Dorsolateral prefrontal cortex (tissue), 120 donors: ENCODE measurements at regions of chr19 and their contacts with region 1.

Region 1: DNA sequence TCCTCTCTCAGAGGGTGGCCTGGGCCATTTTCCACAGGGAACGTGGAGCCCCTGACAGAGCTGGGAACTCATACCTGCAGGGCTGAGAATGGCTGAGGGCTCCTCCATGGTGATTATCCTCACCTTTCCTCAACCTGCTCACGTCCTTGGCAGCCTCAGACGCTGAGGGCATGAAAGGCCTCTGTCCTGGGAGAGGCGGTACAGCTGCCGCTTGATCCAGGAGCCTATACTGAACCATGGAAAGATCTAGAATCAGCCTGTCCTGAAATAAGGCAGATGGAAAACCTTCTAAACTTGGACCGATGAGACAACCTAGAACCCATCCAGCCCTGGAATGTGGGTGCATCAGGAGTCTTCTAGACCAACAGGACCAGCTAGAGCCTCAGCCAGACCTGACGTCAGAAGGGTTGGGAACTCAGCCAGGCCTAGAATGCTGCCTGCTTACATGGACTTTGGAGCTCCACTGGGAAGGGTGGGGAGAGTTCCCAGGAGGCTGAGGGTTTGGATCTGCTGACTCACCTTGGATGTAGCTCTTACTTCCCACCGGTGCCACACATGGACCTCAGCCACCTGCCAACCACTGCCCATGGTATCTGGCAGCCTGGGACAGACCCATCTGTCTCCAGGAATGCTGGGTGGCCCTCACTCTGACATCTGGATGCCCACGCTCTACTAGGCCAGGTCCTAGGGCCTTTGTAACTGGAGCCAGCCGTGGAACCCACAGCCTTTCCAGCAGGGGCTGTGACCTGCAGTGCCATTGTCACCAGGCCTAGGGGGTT is 7.5 kb downstream of the KCTD15 start:
- DNase-seq: peak in 4 of 10 donors; percentile 30 to 48 (median 40)
- H3K4me3 ChIP-seq: no peak overlapping the region
- H3K27ac ChIP-seq: peak overlapping the region in 31 of 59 donors; percentile 11 to 79 (median 46)
- H3K27me3 ChIP-seq: no peaks in the 10 kb centered on the region
- CTCF ChIP-seq: no peak

Region 2: GRCh38 chr19:33998739-33999345 is 194.6 kb after region 1 on chr19:
- intact Hi-C with region 1: loop called in 1 of 2 experiments (anchors 10 kb)
- DNase-seq: no peak
- H3K4me3 ChIP-seq: peak overlapping the region in 18 of 59 donors; percentile 2 to 34 (median 16)
- H3K27ac ChIP-seq: no peak overlapping the region
- H3K27me3 ChIP-seq: peaks cover 0 to 13% (median 0%) of the 10 kb centered on the region in 45 donors
- CTCF ChIP-seq: peak in 55 of 56 donors; percentile 27 to 75 (median 51)